CD8-positive, alpha-beta memory T cell (primary cell): ENCODE measurements at regions of chr5 and their contacts with region 1.

Region 1: GRCh38 chr5:81751009-81751835 is at the start of gene SSBP2:
- DNase-seq: peak; percentile 98 to 99 (median 99)
- H3K4me3 ChIP-seq: peak within 1 kb of the TSS; percentile 69
- H3K4me3 Mint-ChIP-seq: peak within 1 kb of the TSS; percentile 94 to 98 (median 95)
- H3K27ac ChIP-seq: peak within 1 kb of the TSS; percentile 71
- H3K27ac Mint-ChIP-seq: peak within 1 kb of the TSS; percentile 85 to 97 (median 92)
- H3K4me1 ChIP-seq: peaks cover 17% of the 10 kb centered on the region
- H3K4me1 Mint-ChIP-seq: peaks cover 10 to 35% (median 21%) of the 10 kb centered on the region in 3 donors
- H3K27me3 ChIP-seq: no peaks in the 10 kb centered on the region
- H3K27me3 Mint-ChIP-seq: peaks cover 3 to 11% of the 10 kb centered on the region in 2 donors
- total RNA-seq, gene SSBP2: 9.2 to 10.4 TPM

Region 2: DNA sequence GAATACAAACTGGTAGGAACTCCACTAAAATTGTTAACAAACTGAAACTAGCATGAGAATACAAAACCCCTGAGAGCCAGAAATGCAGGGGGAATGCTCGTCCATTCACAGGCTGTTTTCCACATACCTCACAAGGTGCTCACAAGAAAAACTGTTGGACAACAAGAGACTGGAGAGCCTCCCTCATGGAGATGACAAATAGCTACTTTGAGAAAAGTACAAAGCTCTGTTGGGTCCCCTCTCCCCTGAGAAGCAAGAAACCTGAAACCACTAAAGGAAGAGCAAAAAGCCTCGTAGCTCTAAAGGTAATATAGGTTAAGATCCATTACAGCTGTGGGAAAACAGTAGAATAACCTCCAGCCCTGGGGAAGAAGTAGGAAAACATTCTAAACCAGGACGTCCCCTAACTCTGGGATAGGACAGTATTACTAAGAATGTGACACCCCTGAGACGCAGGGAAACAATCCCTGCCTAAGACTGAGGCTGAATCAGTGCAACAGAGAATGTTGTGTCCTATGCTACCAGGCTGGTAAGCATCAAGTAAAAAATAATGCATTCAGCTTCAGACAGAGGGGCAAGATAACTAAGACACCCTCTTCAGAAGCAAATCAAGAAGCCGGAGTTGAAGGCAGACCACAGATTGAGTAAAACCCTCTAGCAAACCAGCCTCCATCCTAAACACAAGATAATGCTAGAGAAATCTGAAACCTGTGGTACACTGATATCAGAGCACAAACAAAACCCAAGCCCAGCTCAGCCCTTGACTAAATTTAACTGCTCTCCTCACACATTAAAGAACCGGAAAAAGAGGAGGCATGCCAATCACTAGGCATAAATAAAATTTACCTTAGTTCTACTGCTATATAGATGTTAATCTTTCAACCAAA is 160.5 kb before region 1 on chr5:
- CTCF ChIA-PET with region 1: no interaction called
- POLR2A ChIA-PET with region 1: no interaction called
- DNase-seq: no peak
- H3K4me3 ChIP-seq: no peak overlapping the region
- H3K4me3 Mint-ChIP-seq: no peak overlapping the region
- H3K27ac ChIP-seq: no peak overlapping the region
- H3K27ac Mint-ChIP-seq: no peak overlapping the region
- H3K4me1 ChIP-seq: no peaks in the 10 kb centered on the region
- H3K4me1 Mint-ChIP-seq: peaks cover 5 to 16% (median 10%) of the 10 kb centered on the region in 3 donors
- H3K27me3 ChIP-seq: no peaks in the 10 kb centered on the region
- H3K27me3 Mint-ChIP-seq: no peaks in the 10 kb centered on the region

Region 3: GRCh38 chr5:81726297-81726696 is 24.9 kb before region 1 on chr5:
- CTCF ChIA-PET with region 1: no interaction called
- POLR2A ChIA-PET with region 1: no interaction called
- DNase-seq: no peak
- H3K4me3 ChIP-seq: no peak overlapping the region
- H3K4me3 Mint-ChIP-seq: no peak overlapping the region
- H3K27ac ChIP-seq: no peak overlapping the region
- H3K27ac Mint-ChIP-seq: peak overlapping the region in 1 of 8 donors; percentile 52
- H3K4me1 ChIP-seq: peaks cover 3% of the 10 kb centered on the region
- H3K4me1 Mint-ChIP-seq: peaks cover 8 to 58% (median 23%) of the 10 kb centered on the region in 3 donors
- H3K27me3 ChIP-seq: no peaks in the 10 kb centered on the region
- H3K27me3 Mint-ChIP-seq: no peaks in the 10 kb centered on the region

Region 4: GRCh38 chr5:81779125-81779915 is 28.1 kb after region 1 on chr5:
- CTCF ChIA-PET with region 1: no interaction called
- POLR2A ChIA-PET with region 1: interaction called, 22 read pairs
- DNase-seq: peak; percentile 6 to 52 (median 33)
- H3K4me3 ChIP-seq: peak overlapping the region; percentile 66
- H3K4me3 Mint-ChIP-seq: peak overlapping the region; percentile 83 to 92 (median 86)
- H3K27ac ChIP-seq: peak overlapping the region; percentile 65
- H3K27ac Mint-ChIP-seq: peak overlapping the region; percentile 59 to 96 (median 94)
- H3K4me1 ChIP-seq: peaks cover 10% of the 10 kb centered on the region
- H3K4me1 Mint-ChIP-seq: peaks cover 20 to 31% (median 26%) of the 10 kb centered on the region in 3 donors
- H3K27me3 ChIP-seq: no peaks in the 10 kb centered on the region
- H3K27me3 Mint-ChIP-seq: no peaks in the 10 kb centered on the region

Region 5: DNA sequence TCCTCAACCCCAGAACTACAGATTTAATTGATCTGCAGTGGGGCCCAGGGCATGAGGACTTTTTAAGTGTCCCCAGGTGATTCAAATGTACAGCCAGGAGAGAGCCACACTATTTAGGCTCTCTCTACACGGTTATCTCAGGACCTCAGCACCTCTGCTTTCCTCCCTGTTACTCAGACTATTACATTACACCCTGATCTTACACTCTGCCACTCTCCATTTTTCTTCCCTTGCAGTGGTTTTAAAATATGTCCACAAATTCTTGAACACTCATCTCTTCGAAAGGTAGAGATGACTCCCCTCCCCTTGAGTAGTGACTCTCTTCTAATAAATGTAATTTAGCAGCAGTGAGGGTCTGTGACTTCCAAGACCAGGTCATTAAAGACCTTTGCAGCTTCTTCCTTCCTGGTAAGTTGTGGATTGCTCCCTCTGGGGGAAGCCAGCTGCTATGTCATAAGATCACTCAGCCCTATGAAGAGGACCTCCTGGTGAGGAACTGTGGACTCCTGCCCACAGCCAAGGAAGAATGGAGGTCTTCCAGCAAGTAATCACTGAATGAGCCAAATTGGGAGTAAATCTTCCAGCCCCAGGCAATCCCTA is 87.2 kb after region 1 on chr5:
- CTCF ChIA-PET with region 1: interaction called, 15 read pairs
- POLR2A ChIA-PET with region 1: interaction called, 7 read pairs
- DNase-seq: peak in 2 of 5 donors; percentile 11 to 37
- H3K4me3 ChIP-seq: no peak overlapping the region
- H3K4me3 Mint-ChIP-seq: no peak overlapping the region
- H3K27ac ChIP-seq: no peak overlapping the region
- H3K27ac Mint-ChIP-seq: no peak overlapping the region
- H3K4me1 ChIP-seq: no peaks in the 10 kb centered on the region
- H3K4me1 Mint-ChIP-seq: peaks cover 2 to 9% (median 3%) of the 10 kb centered on the region in 3 donors
- H3K27me3 ChIP-seq: no peaks in the 10 kb centered on the region
- H3K27me3 Mint-ChIP-seq: no peaks in the 10 kb centered on the region

Region 6: DNA sequence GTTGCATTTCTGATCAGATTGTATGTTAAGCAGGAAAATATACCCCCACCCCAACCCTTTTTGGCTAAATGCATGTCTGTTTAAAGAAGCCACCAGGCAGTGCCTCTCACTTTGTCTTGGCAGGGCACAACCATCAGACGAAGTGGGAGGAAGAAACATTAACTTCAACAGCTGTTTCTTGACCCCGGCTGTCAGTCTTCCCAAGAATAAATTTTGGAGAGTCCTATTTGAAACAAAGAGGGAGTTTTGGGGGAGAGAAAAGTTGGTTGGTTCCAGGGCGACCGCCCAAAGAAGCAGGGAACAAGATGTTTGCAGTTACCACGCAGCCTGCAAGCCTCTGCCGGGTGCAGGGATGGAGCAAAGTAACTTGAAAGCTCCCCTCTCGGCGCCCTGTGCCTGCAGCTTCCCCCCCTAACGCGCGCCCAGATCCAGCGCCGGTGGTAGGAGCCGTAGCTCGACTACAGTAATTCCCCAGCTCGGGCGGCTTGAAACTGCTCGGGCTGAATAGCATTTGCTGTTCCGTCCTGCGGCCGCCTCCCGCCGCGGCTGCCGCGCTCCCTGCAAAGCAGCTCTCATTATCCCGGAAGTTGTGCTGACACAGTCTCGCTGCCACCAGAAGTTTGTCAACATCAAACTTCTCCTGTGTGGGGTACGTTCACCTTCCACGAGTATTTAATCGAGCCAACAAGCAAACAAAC is 100.4 kb after region 1 on chr5:
- CTCF ChIA-PET with region 1: interaction called, 28 read pairs
- POLR2A ChIA-PET with region 1: interaction called, 135 read pairs
- DNase-seq: peak; percentile 78 to 91 (median 86)
- H3K4me3 ChIP-seq: peak overlapping the region; percentile 55
- H3K4me3 Mint-ChIP-seq: peak overlapping the region; percentile 90 to 98 (median 93)
- H3K27ac ChIP-seq: peak overlapping the region; percentile 53
- H3K27ac Mint-ChIP-seq: peak overlapping the region; percentile 86 to 98 (median 96)
- H3K4me1 ChIP-seq: peaks cover 28% of the 10 kb centered on the region
- H3K4me1 Mint-ChIP-seq: peaks cover 32 to 54% (median 40%) of the 10 kb centered on the region in 3 donors
- H3K27me3 ChIP-seq: no peaks in the 10 kb centered on the region
- H3K27me3 Mint-ChIP-seq: no peaks in the 10 kb centered on the region

Region 7: GRCh38 chr5:81971712-81972495 is 220.7 kb after region 1 on chr5 and contains the start of gene ATG10:
- CTCF ChIA-PET with region 1: no interaction called
- POLR2A ChIA-PET with region 1: interaction called, 12 read pairs
- DNase-seq: peak; percentile 83 to 91 (median 87)
- H3K4me3 ChIP-seq: peak within 1 kb of the TSS; percentile 79
- H3K4me3 Mint-ChIP-seq: peak within 1 kb of the TSS; percentile 94 to 99 (median 97)
- H3K27ac ChIP-seq: peak within 1 kb of the TSS; percentile 93
- H3K27ac Mint-ChIP-seq: peak within 1 kb of the TSS; percentile 95 to 100 (median 100)
- H3K4me1 ChIP-seq: peaks cover 23% of the 10 kb centered on the region
- H3K4me1 Mint-ChIP-seq: peaks cover 19 to 26% (median 20%) of the 10 kb centered on the region in 3 donors
- H3K27me3 ChIP-seq: no peaks in the 10 kb centered on the region
- H3K27me3 Mint-ChIP-seq: no peaks in the 10 kb centered on the region
- total RNA-seq, gene ATG10: 8.3 to 8.8 TPM